ENCODE measurements at regions of chr19 and their contacts with region 1.

Region 1: GRCh38 chr19:11446652-11447301 is 11.3 kb downstream of the PRKCSH start:
- DNase-seq: peak in 2 of 3 donors; percentile 57 to 70
- ATAC-seq: peak; percentile 73
- H3K4me3 ChIP-seq: no peak overlapping the region
- H3K4me1 ChIP-seq: no peaks in the 10 kb centered on the region
- CTCF ChIP-seq: peak; percentile 56

Region 2: DNA sequence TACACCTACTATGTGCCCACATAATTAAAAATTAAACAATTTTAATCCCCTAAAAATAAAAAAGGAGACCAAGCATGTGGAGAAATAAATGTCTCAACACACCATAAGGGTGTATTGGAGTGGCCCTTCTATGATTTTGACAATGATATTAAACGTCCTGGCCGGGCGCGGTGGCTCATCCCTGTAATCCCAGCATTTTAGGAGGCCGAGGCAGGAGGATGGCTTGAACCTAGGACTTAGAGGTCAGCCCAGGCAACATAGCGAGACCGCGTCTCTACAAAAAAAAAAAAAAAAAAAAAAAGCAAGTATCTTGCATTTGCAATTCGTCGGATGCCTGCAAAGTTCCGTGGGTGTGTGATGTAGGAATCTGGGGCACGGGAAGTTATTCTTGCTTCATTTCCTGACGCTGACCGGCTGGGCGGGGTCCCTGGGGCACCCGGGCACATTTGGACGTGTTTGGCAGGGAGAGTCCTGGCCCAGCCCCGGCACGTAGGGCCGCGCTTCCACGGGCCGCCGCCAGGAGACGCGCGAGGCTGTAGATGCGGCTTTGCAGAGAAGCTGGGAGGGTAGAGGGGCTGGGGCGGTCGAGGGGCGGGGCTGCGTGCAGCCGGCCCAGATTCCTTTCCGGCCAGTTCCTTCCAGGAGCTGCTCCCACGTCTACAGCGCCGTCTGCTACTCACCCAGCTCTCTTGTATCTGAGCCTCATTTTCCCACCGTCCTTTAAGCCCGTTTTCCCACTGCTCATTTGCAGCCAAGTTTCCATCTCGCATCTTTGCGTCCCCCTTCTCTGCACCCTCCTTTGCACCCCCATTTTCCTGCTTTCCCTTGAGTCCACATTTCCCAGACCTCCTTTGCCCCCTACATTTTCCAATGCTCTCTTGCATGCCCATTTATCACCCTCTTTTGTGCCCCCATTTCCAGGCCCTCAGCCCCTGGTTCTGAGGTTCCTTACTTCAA is 153.1 kb before region 1 on chr19:
- intact Hi-C with region 1: loop called in 1 of 2 experiments (anchors 10 kb)
- DNase-seq: peak; percentile 94 to 97 (median 96)
- ATAC-seq: peak; percentile 97
- H3K4me3 ChIP-seq: no peak overlapping the region
- H3K4me1 ChIP-seq: peaks cover 11% of the 10 kb centered on the region
- CTCF ChIP-seq: peak; percentile 99

Region 3: DNA sequence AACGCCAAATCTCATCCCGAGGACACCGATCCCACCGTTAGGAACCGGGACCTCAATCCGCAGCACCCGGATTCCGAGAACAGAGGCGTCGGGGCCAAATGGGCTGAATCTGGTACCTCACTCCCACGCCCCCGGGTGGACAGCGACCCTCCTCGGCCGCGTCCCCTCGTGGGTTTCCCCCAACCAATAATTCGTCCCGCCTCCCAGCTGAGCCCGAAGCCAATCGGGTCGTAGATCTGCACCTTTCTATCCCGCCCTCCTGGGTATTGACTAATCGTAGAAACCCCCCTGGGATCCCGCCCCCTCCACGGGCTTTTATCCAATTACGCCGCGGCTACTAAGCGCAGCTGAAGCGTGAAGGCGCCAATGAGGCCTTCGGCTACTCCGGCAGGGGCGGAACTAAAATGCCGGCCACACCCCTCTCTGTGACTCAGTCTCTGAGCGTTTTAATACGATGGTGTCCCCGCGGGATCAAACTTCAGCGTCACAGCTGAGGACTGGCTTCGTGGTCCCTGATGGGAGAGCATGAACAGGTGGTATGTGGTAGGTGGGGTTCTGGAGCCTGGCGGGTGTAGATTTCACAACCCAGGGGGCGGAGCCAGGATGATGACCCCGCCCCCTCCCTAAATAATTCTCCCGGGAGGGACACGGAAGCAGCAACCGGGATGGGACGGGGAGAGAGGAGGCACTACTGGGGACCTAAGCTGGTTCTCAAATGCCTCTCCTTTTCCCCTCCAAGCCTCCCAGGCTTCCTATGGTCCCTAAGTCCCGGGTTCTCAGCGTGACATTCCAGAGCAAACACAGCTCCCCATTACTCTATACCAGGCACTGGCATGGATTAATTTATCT is 100.5 kb before region 1 on chr19 and contains the starts of genes CCDC159 and TMEM205:
- intact Hi-C with region 1: no loop called
- DNase-seq: peak; percentile 98 to 99 (median 99)
- ATAC-seq: peak; percentile 96
- H3K4me3 ChIP-seq: peak within 1 kb of the TSS; percentile 44
- H3K4me1 ChIP-seq: peaks cover 25% of the 10 kb centered on the region
- CTCF ChIP-seq: peak; percentile 25
- total RNA-seq, gene CCDC159: 27.4 to 40.5 (median 38.8) TPM
- total RNA-seq, gene TMEM205: 37.3 to 61.8 (median 55.7) TPM